Naive thymus-derived CD4-positive, alpha-beta T cell (primary cell): ENCODE measurements at regions of chr11 and their contacts with region 1.

Region 1: GRCh38 chr11:117985953-117986887 is at the start of gene IL10RA:
- DNase-seq: peak; percentile 72 to 95 (median 80)
- ATAC-seq: peak; percentile 92
- H3K4me3 ChIP-seq: peak within 1 kb of the TSS; percentile 97
- H3K4me3 Mint-ChIP-seq: peak within 1 kb of the TSS; percentile 84 to 97 (median 91)
- H3K27ac ChIP-seq: peak within 1 kb of the TSS; percentile 91
- H3K27ac Mint-ChIP-seq: peak within 1 kb of the TSS; percentile 87 to 98 (median 92)
- H3K4me1 ChIP-seq: peaks cover 43 to 45% of the 10 kb centered on the region in 2 donors
- H3K4me1 Mint-ChIP-seq: peaks cover 44 to 78% (median 69%) of the 10 kb centered on the region in 7 donors
- H3K27me3 ChIP-seq: no peaks in the 10 kb centered on the region
- H3K27me3 Mint-ChIP-seq: no peaks in the 10 kb centered on the region
- total RNA-seq, gene IL10RA: 154 to 300 (median 184) TPM

Region 2: GRCh38 chr11:117327567-117328374 is 658.4 kb before region 1 on chr11 and contains the start of gene CEP164:
- CTCF ChIA-PET with region 1: no interaction called
- POLR2A ChIA-PET with region 1: no interaction called
- intact Hi-C with region 1: loop called in 1 of 2 experiments (anchors 2 kb)
- DNase-seq: peak; percentile 76 to 95 (median 93)
- ATAC-seq: peak; percentile 96
- H3K4me3 ChIP-seq: peak within 1 kb of the TSS; percentile 66
- H3K4me3 Mint-ChIP-seq: peak within 1 kb of the TSS in 8 of 10 donors; percentile 26 to 69 (median 44)
- H3K27ac ChIP-seq: peak within 1 kb of the TSS; percentile 79
- H3K27ac Mint-ChIP-seq: peak within 1 kb of the TSS in 4 of 9 donors; percentile 11 to 81 (median 68)
- H3K4me1 ChIP-seq: peaks cover 0 to 10% of the 10 kb centered on the region in 2 donors
- H3K4me1 Mint-ChIP-seq: peaks cover 0 to 19% (median 14%) of the 10 kb centered on the region in 7 donors
- H3K27me3 ChIP-seq: no peaks in the 10 kb centered on the region
- H3K27me3 Mint-ChIP-seq: peaks cover 0 to 4% (median 0%) of the 10 kb centered on the region in 5 donors
- total RNA-seq, gene CEP164: 36.6 to 47.6 (median 36.8) TPM

Region 3: DNA sequence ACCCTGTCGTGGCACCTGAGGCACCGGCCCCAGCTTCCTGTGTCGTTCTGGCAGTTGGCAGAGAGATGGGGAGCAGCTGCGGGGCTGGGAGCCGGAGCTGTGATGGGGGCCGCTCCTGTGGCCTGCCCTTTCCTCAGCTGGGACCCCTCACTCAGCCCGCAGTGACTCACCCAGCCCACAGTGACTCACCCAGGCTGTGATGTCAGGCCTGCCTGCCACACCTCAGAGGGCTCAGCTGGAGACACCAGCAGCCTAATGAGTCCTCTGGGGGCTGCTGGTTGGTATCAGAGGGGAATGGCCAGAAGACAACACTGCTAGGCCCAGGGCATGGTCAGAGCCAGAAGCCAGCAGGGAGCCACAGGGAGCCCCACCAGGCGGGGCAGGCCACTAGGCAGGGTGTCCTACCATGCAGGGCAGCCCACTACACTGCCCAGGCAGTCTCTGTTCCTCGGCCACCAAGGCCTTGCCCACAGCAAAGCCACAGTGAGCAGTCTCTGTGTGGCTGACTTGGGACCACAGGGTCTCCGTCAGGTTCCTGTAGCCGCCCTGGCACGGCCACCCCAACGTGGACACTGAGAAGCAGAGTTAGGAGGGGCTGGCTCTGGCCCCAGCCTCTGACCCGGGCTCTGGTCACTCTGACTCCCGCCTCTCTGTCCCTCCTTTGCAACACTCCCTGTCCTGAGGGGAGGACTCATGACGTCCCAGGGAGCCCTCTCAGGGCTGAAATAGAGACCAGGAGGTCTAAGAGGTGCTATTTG is 157.4 kb before region 1 on chr11:
- CTCF ChIA-PET with region 1: no interaction called
- POLR2A ChIA-PET with region 1: interaction called, 3 read pairs
- intact Hi-C with region 1: loop called in 1 of 2 experiments (anchors 1 kb)
- DNase-seq: peak in 6 of 9 donors; percentile 19 to 82 (median 24)
- ATAC-seq: peak; percentile 88
- H3K4me3 ChIP-seq: no peak overlapping the region
- H3K4me3 Mint-ChIP-seq: peak overlapping the region in 7 of 10 donors; percentile 16 to 79 (median 48)
- H3K27ac ChIP-seq: peak overlapping the region; percentile 35
- H3K27ac Mint-ChIP-seq: peak overlapping the region in 6 of 9 donors; percentile 16 to 87 (median 60)
- H3K4me1 ChIP-seq: peaks cover 38 to 47% of the 10 kb centered on the region in 2 donors
- H3K4me1 Mint-ChIP-seq: peaks cover 48 to 72% (median 50%) of the 10 kb centered on the region in 7 donors
- H3K27me3 ChIP-seq: no peaks in the 10 kb centered on the region
- H3K27me3 Mint-ChIP-seq: peaks cover 0 to 2% (median 0%) of the 10 kb centered on the region in 5 donors

Region 4: GRCh38 chr11:117970400-117971024 is 15.7 kb before region 1 on chr11:
- CTCF ChIA-PET with region 1: interaction called, 3 read pairs
- POLR2A ChIA-PET with region 1: interaction called, 28 read pairs
- intact Hi-C with region 1: loop called (anchors 1 to 2 kb)
- DNase-seq: peak in 1 of 9 donors; percentile 8
- ATAC-seq: peak; percentile 85
- H3K4me3 ChIP-seq: peak overlapping the region; percentile 31
- H3K4me3 Mint-ChIP-seq: peak overlapping the region in 9 of 10 donors; percentile 26 to 80 (median 50)
- H3K27ac ChIP-seq: no peak overlapping the region
- H3K27ac Mint-ChIP-seq: peak overlapping the region in 8 of 9 donors; percentile 7 to 76 (median 20)
- H3K4me1 ChIP-seq: peaks cover 48 to 50% of the 10 kb centered on the region in 2 donors
- H3K4me1 Mint-ChIP-seq: peaks cover 38 to 71% (median 65%) of the 10 kb centered on the region in 7 donors
- H3K27me3 ChIP-seq: no peaks in the 10 kb centered on the region
- H3K27me3 Mint-ChIP-seq: no peaks in the 10 kb centered on the region

Region 5: DNA sequence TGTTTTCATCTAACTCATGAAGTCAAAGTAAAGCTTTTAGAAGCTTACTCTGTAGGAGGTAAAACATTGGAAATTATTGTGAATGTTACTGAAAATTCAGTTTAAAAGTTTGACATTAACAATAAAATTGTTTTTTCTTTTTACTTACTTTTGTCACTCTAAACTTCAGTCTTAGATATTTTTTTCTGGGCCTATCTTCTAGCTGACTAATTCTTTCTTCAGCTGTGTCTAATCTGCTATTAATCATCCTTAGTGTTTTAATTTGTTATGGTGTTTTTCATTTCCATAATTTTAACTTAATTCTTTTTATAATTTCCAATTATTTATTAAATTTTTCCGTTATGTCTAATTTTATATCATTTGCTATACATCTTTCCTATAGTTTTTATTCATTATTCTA is 34.9 kb after region 1 on chr11:
- CTCF ChIA-PET with region 1: interaction called, 4 read pairs
- POLR2A ChIA-PET with region 1: interaction called, 3 read pairs
- intact Hi-C with region 1: loop called in 1 of 2 experiments (anchors 5 kb)
- DNase-seq: no peak
- ATAC-seq: no peak
- H3K4me3 ChIP-seq: no peak overlapping the region
- H3K4me3 Mint-ChIP-seq: no peak overlapping the region
- H3K27ac ChIP-seq: no peak overlapping the region
- H3K27ac Mint-ChIP-seq: no peak overlapping the region
- H3K4me1 ChIP-seq: peaks cover 7 to 13% of the 10 kb centered on the region in 2 donors
- H3K4me1 Mint-ChIP-seq: peaks cover 8 to 12% (median 11%) of the 10 kb centered on the region in 7 donors
- H3K27me3 ChIP-seq: no peaks in the 10 kb centered on the region
- H3K27me3 Mint-ChIP-seq: peaks cover 0 to 4% (median 0%) of the 10 kb centered on the region in 5 donors

Region 6: GRCh38 chr11:118338637-118339061 is 352.4 kb after region 1 on chr11:
- CTCF ChIA-PET with region 1: no interaction called
- POLR2A ChIA-PET with region 1: no interaction called
- intact Hi-C with region 1: loop called in 1 of 2 experiments (anchors 5 kb)
- DNase-seq: peak; percentile 46 to 99 (median 92)
- ATAC-seq: peak; percentile 82
- H3K4me3 ChIP-seq: peak overlapping the region; percentile 88
- H3K4me3 Mint-ChIP-seq: peak overlapping the region; percentile 89 to 98 (median 96)
- H3K27ac ChIP-seq: peak overlapping the region; percentile 96
- H3K27ac Mint-ChIP-seq: peak overlapping the region; percentile 95 to 100 (median 99)
- H3K4me1 ChIP-seq: peaks cover 46 to 50% of the 10 kb centered on the region in 2 donors
- H3K4me1 Mint-ChIP-seq: peaks cover 28 to 68% (median 55%) of the 10 kb centered on the region in 7 donors
- H3K27me3 ChIP-seq: no peaks in the 10 kb centered on the region
- H3K27me3 Mint-ChIP-seq: no peaks in the 10 kb centered on the region